Psoas muscle (tissue), 8 donors: ENCODE measurements at regions of chr3 and their contacts with region 1.

Region 1: DNA sequence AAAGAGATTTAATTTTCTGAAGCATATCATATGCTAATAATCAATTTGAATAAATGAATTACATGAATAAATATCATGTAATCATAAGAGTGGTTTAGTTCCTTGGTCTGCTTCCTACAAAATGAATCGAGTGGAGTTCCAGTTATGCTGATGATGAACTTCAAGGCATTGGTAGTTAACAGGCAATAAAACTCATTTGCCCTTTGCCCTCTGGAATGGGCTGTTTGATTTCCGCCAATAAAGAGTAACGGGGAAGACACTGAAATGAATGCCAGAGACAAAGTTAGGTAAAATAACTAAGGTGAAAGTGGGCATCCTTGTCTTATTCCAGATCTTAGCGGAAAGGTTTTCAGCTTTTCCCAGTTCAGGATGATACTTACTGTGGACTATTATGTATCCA is 90.1 kb downstream of the C3orf38 start:
- DNase-seq: no peak
- ATAC-seq: no peak
- H3K4me3 ChIP-seq: no peak overlapping the region
- H3K27ac ChIP-seq: no peak overlapping the region
- H3K4me1 ChIP-seq: no peaks in the 10 kb centered on the region
- H3K27me3 ChIP-seq: no peaks in the 10 kb centered on the region
- CTCF ChIP-seq: no peak

Region 2: GRCh38 chr3:87468938-87469337 is 770.9 kb before region 1 on chr3:
- intact Hi-C with region 1: loop called in 1 of 2 experiments (anchors 5 kb)
- DNase-seq: no peak
- ATAC-seq: no peak
- H3K4me3 ChIP-seq: no peak overlapping the region
- H3K27ac ChIP-seq: no peak overlapping the region
- H3K4me1 ChIP-seq: no peaks in the 10 kb centered on the region
- H3K27me3 ChIP-seq: no peaks in the 10 kb centered on the region
- CTCF ChIP-seq: no peak

Region 3: GRCh38 chr3:88321363-88322051 is 81.6 kb after region 1 on chr3:
- intact Hi-C with region 1: no loop called
- DNase-seq: no peak
- ATAC-seq: no peak
- H3K4me3 ChIP-seq: no peak overlapping the region
- H3K27ac ChIP-seq: no peak overlapping the region
- H3K4me1 ChIP-seq: no peaks in the 10 kb centered on the region
- H3K27me3 ChIP-seq: peaks cover 0 to 2% (median 0%) of the 10 kb centered on the region in 3 donors
- CTCF ChIP-seq: no peak